Naive thymus-derived CD4-positive, alpha-beta T cell (primary cell): ENCODE measurements at regions of chr6 and their contacts with region 1.

Region 1: DNA sequence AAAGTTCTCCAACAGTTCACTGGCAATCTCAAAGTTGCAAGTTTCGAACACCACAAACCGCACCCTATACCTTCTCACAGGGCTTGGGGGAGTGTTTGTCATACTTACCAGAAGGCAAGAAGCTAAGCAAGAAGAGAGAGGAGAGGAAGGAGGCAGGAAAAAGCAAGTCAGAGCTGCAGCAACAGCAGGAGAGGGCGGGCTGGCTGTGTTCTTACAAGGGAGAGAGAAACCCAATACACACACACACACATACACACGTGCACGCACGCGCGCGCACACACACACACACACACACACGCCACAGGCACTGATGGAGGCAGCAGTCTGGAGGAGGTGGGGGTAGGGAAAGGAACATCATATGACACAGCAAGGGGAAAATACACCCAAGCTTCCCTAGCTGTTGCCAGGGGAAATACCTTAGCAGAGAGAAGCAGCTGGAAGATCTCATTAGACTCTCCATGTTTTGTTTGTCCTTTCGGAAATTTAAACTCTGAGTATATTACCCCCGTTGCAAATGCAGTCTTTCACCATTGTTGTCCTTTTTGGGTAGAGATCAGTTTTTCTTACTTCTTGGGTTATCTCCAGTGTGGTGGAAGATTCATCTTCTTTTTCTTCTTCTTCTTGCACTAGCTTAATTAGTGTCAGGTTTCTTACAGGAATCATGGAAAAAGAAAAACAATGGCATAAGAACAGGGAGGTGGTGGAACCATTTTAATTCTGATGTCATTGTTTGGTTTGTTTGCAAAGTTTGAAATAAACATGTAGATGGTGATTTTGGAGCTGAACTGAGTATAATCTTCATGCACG is at the start of gene TXLNB:
- DNase-seq: peak; percentile 32 to 94 (median 87)
- ATAC-seq: peak; percentile 92
- H3K4me3 ChIP-seq: peak within 1 kb of the TSS; percentile 42
- H3K4me3 Mint-ChIP-seq: peak within 1 kb of the TSS; percentile 80 to 92 (median 90)
- H3K27ac ChIP-seq: peak within 1 kb of the TSS; percentile 75
- H3K27ac Mint-ChIP-seq: peak within 1 kb of the TSS; percentile 93 to 99 (median 98)
- H3K4me1 ChIP-seq: peaks cover 33 to 39% of the 10 kb centered on the region in 2 donors
- H3K4me1 Mint-ChIP-seq: peaks cover 36 to 87% (median 81%) of the 10 kb centered on the region in 7 donors
- H3K27me3 ChIP-seq: no peaks in the 10 kb centered on the region
- H3K27me3 Mint-ChIP-seq: no peaks in the 10 kb centered on the region
- total RNA-seq, gene TXLNB: 0.29 to 1.1 (median 0.66) TPM

Region 2: GRCh38 chr6:138987640-138988468 is 304.2 kb before region 1 on chr6 and contains the start of gene REPS1:
- CTCF ChIA-PET with region 1: interaction called, 3 read pairs
- POLR2A ChIA-PET with region 1: interaction called, 8 read pairs
- intact Hi-C with region 1: loop called in 1 of 2 experiments (anchors 2 kb)
- DNase-seq: peak; percentile 83 to 97 (median 89)
- ATAC-seq: peak; percentile 95
- H3K4me3 ChIP-seq: peak within 1 kb of the TSS; percentile 61
- H3K4me3 Mint-ChIP-seq: peak within 1 kb of the TSS in 7 of 10 donors; percentile 86 to 94 (median 92)
- H3K27ac ChIP-seq: peak within 1 kb of the TSS; percentile 89
- H3K27ac Mint-ChIP-seq: peak within 1 kb of the TSS; percentile 84 to 96 (median 91)
- H3K4me1 ChIP-seq: peaks cover 32 to 40% of the 10 kb centered on the region in 2 donors
- H3K4me1 Mint-ChIP-seq: peaks cover 7 to 24% (median 13%) of the 10 kb centered on the region in 7 donors
- H3K27me3 ChIP-seq: no peaks in the 10 kb centered on the region
- H3K27me3 Mint-ChIP-seq: peaks cover 0 to 2% (median 0%) of the 10 kb centered on the region in 5 donors
- total RNA-seq, gene REPS1: 55.9 to 74.6 (median 69.7) TPM

Region 3: DNA sequence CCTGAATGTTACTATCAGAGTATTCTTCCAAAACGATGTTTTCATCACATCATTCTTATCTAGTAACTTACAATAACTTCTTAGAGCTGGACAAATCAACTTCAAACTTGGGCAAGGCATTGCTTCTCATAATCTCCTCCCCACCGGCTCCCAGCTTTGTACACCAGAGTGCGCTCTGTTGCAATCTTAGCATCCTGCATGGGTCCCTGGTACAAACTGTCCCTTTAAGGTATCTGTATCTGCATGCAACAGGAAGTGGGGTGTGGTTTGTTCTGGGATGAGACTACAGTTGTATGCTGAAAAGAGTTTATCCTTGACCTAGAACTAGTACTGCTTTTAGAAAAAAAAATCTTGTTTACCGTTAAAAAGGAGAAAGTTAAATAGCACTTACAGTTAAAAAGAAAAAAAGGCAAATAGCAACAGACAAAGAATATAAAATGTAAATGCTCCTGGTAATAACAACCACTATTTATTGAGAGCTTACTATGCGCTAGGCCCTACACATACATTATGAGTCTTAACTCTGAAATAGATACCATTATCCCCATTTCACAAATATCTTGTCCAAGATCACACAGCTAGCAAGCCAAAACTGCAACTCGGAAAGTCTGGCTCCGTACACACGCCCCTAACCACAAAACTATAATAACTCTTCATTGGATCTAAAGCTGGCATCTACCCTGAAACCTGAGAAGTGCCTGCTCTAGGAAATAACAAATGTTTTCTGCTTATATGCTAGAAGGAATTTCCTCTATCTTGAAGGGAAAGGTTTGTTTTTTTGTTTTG is 166.9 kb before region 1 on chr6:
- CTCF ChIA-PET with region 1: interaction called, 7 read pairs
- POLR2A ChIA-PET with region 1: interaction called, 11 read pairs
- intact Hi-C with region 1: loop called (anchors 1 kb)
- DNase-seq: peak in 8 of 9 donors; percentile 65 to 90 (median 84)
- ATAC-seq: peak; percentile 99
- H3K4me3 ChIP-seq: peak overlapping the region; percentile 31
- H3K4me3 Mint-ChIP-seq: peak overlapping the region; percentile 25 to 86 (median 68)
- H3K27ac ChIP-seq: peak overlapping the region; percentile 60
- H3K27ac Mint-ChIP-seq: peak overlapping the region; percentile 86 to 97 (median 94)
- H3K4me1 ChIP-seq: peaks cover 28 to 38% of the 10 kb centered on the region in 2 donors
- H3K4me1 Mint-ChIP-seq: peaks cover 19 to 65% (median 60%) of the 10 kb centered on the region in 7 donors
- H3K27me3 ChIP-seq: no peaks in the 10 kb centered on the region
- H3K27me3 Mint-ChIP-seq: no peaks in the 10 kb centered on the region

Region 4: DNA sequence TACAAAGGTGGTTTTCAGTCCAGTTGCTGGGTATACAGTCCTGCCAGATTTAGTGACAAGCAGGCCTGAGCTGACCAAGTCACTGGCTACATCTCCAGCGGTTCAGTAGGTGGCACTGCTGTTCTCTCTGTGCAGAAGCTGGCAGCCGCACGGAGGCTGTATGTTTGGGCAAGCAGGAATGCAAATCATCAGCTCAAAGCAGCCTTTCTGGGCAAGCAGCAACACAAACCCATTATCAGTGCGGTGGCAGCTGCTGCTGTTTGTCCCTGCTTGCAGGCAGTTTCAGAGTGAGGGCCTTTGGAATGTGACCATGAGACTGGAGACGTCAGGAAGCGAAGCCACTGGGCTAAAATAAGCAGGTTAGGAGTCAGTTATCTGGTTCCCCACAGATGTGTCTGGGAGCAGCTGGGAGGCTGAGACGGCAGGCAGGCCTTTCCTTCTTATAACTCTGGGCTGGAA is 72.7 kb before region 1 on chr6:
- CTCF ChIA-PET with region 1: interaction called, 20 read pairs
- POLR2A ChIA-PET with region 1: interaction called, 8 read pairs
- intact Hi-C with region 1: loop called (anchors 1 kb)
- DNase-seq: peak; percentile 39 to 76 (median 60)
- ATAC-seq: peak; percentile 100
- H3K4me3 ChIP-seq: no peak overlapping the region
- H3K4me3 Mint-ChIP-seq: peak overlapping the region in 8 of 10 donors; percentile 41 to 68 (median 58)
- H3K27ac ChIP-seq: no peak overlapping the region
- H3K27ac Mint-ChIP-seq: peak overlapping the region; percentile 49 to 92 (median 78)
- H3K4me1 ChIP-seq: peaks cover 5 to 10% of the 10 kb centered on the region in 2 donors
- H3K4me1 Mint-ChIP-seq: peaks cover 6 to 20% (median 12%) of the 10 kb centered on the region in 7 donors
- H3K27me3 ChIP-seq: no peaks in the 10 kb centered on the region
- H3K27me3 Mint-ChIP-seq: no peaks in the 10 kb centered on the region

Region 5: DNA sequence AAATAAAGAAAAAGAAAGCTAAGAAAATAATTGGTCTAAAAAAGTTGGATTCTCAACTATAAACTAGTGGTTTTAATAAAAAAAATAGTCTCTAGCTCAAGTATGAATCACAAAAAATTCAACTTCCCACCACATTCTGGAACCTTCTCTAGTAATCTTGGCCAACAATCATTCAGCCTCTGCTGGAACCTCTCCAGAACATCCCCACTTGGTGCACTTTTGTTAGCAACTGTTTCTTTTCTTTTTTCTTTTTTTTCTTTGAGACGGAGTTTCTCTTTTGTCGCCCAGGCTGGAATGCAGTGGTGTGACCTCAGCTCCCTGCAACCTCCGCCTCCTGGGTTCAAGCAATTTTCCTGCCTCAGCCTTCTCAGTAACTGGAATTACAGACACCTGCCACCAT is 35.9 kb before region 1 on chr6:
- CTCF ChIA-PET with region 1: interaction called, 3 read pairs
- POLR2A ChIA-PET with region 1: interaction called, 10 read pairs
- intact Hi-C with region 1: no loop called
- DNase-seq: no peak
- ATAC-seq: no peak
- H3K4me3 ChIP-seq: no peak overlapping the region
- H3K4me3 Mint-ChIP-seq: no peak overlapping the region
- H3K27ac ChIP-seq: no peak overlapping the region
- H3K27ac Mint-ChIP-seq: no peak overlapping the region
- H3K4me1 ChIP-seq: peaks cover 11% of the 10 kb centered on the region in 2 donors
- H3K4me1 Mint-ChIP-seq: peaks cover 21 to 46% (median 41%) of the 10 kb centered on the region in 7 donors
- H3K27me3 ChIP-seq: no peaks in the 10 kb centered on the region
- H3K27me3 Mint-ChIP-seq: no peaks in the 10 kb centered on the region

Region 6: GRCh38 chr6:139303185-139303584 is 11.2 kb after region 1 on chr6:
- CTCF ChIA-PET with region 1: interaction called, 4 read pairs
- POLR2A ChIA-PET with region 1: interaction called, 9 read pairs
- intact Hi-C with region 1: loop called in 1 of 2 experiments (anchors 1 kb)
- DNase-seq: no peak
- ATAC-seq: no peak
- H3K4me3 ChIP-seq: no peak overlapping the region
- H3K4me3 Mint-ChIP-seq: no peak overlapping the region
- H3K27ac ChIP-seq: no peak overlapping the region
- H3K27ac Mint-ChIP-seq: no peak overlapping the region
- H3K4me1 ChIP-seq: no peaks in the 10 kb centered on the region
- H3K4me1 Mint-ChIP-seq: peaks cover 2 to 24% (median 13%) of the 10 kb centered on the region in 7 donors
- H3K27me3 ChIP-seq: no peaks in the 10 kb centered on the region
- H3K27me3 Mint-ChIP-seq: no peaks in the 10 kb centered on the region

Region 7: DNA sequence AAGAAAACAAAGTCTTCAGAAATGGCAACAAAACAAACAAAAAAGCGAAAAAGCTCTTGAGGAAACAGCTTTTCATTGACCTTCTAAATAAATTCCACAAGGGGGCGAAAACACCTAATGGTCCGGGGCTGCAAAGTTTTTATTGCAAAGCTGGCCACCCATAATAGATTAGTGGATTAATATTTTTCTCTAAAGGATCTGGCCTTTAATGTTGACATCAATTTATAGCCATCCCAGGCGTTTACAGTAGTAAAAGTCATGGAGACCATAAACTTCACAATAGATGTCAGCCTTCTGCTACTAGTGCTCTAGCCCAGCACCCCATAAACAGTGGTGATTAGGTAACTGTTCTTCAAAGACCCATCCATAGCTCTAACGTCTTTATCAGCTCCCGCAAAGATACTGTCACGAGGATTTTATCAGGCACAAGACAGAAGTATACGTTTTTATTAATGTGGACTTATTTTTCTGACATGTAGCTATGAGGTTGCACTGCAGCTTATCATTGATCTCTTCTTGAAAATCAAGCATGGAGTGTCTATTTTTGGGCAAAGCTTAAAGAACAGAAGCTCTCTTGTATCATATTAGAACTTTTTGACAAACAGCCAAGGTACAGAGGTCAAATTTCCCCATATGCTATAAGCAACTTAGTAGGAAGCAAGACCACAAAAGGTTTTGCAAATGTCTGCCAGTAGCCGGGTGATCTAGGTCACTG is 77.7 kb after region 1 on chr6:
- CTCF ChIA-PET with region 1: interaction called, 31 read pairs
- POLR2A ChIA-PET with region 1: interaction called, 81 read pairs
- intact Hi-C with region 1: loop called (anchors 1 kb)
- DNase-seq: peak in 6 of 9 donors; percentile 16 to 49 (median 41)
- ATAC-seq: no peak
- H3K4me3 ChIP-seq: peak overlapping the region; percentile 3
- H3K4me3 Mint-ChIP-seq: peak overlapping the region; percentile 13 to 100 (median 96)
- H3K27ac ChIP-seq: peak overlapping the region; percentile 82
- H3K27ac Mint-ChIP-seq: peak overlapping the region; percentile 60 to 100 (median 98)
- H3K4me1 ChIP-seq: peaks cover 25 to 39% of the 10 kb centered on the region in 2 donors
- H3K4me1 Mint-ChIP-seq: peaks cover 25 to 53% (median 50%) of the 10 kb centered on the region in 7 donors
- H3K27me3 ChIP-seq: no peaks in the 10 kb centered on the region
- H3K27me3 Mint-ChIP-seq: peaks cover 0 to 2% (median 0%) of the 10 kb centered on the region in 5 donors